ENCODE measurements at regions of chr15 and their contacts with region 1.

Region 1: DNA sequence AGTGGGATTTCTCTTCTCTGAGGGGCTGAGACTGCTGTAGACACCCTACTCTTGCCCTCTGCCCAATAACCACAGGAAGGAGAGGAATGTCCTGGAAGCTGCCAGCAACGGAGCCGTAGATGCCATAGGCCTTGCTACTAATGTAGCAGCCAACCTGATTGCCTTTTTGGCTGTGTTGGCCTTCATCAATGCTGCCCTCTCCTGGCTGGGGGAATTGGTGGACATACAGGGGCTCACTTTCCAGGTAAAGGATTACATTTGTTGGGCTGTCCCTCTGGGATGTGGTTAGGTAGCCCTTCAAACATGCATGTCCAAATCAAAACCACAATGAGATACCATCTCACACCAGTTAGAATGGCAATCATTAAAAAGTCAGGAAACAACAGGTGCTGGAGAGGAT is 16.1 kb downstream of the SLC28A2 start:
- DNase-seq: peak; percentile 13
- H3K4me3 Mint-ChIP-seq: no peak overlapping the region
- H3K27ac Mint-ChIP-seq: no peak overlapping the region
- H3K4me1 Mint-ChIP-seq: no peaks in the 10 kb centered on the region
- H3K27me3 Mint-ChIP-seq: no peaks in the 10 kb centered on the region
- CTCF ChIP-seq: no peak

Region 2: DNA sequence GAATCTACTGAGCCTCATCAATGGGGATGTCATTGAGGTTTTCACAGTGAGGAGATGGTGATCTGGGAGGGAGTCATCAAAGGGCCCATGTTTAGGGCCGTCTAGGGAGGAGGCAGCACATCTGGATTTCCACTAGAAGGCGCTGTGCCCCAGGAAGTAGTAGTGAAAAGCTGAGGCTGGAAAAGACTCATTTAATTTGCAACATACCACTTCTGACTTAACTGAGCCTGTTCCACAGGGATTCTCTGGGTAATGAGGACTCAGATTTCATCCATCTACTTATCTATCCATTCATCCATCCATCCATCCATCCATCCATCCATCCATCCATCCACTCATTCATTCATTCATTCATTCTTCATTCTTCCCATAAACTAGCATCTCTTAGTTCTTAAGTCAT is 62.9 kb before region 1 on chr15:
- CTCF ChIA-PET with region 1: interaction called, 4 read pairs
- POLR2A ChIA-PET with region 1: no interaction called
- intact Hi-C with region 1: loop called (anchors 2 kb)
- DNase-seq: peak; percentile 80
- H3K4me3 Mint-ChIP-seq: no peak overlapping the region
- H3K27ac Mint-ChIP-seq: no peak overlapping the region
- H3K4me1 Mint-ChIP-seq: peaks cover 6% of the 10 kb centered on the region
- H3K27me3 Mint-ChIP-seq: no peaks in the 10 kb centered on the region
- CTCF ChIP-seq: peak; percentile 75

Region 3: DNA sequence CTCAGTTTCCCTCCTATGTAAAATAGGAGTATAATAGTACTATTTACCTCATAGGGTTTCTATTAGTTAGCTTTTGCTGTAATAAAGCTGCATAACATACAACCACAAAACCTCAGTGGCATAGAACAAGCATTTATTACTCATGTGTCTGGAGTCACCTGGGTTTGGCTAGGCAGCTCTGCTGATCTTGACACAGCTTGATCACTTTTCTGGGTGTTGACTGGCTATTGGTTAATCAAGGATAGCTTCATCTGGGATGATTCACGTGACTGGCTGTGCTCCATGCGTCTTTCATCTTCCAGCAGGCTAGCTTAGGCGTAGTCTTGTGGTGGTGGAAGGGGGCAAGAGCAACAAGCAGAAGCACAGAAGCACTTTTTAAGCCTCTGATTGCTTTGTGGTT is 479.3 kb after region 1 on chr15:
- CTCF ChIA-PET with region 1: no interaction called
- POLR2A ChIA-PET with region 1: no interaction called
- intact Hi-C with region 1: no loop called
- DNase-seq: peak; percentile 2
- H3K4me3 Mint-ChIP-seq: no peak overlapping the region
- H3K27ac Mint-ChIP-seq: no peak overlapping the region
- H3K4me1 Mint-ChIP-seq: no peaks in the 10 kb centered on the region
- H3K27me3 Mint-ChIP-seq: no peaks in the 10 kb centered on the region
- CTCF ChIP-seq: no peak

Measured in MCF 10A (cell line).